A549 (cell line): ENCODE measurements at regions of chr12 and their contacts with region 1.

Region 1: GRCh38 chr12:62793256-62794217 is 141.4 kb downstream of the PPM1H start:
- DNase-seq: peak; percentile 84 to 96
- ATAC-seq: peak; percentile 93 to 96
- H3K4me3 ChIP-seq: 0 out of 3 replicates have a peak overlapping the region, but pooled peaks have one; percentile 2
- H3K27ac ChIP-seq: peak overlapping the region; percentile 91 to 94
- H3K4me1 ChIP-seq: peaks cover 42% of the 10 kb centered on the region
- CTCF ChIP-seq: peak; percentile 98
- EP300 ChIP-seq: peak in 1 of 2 experiments; percentile 37; a peak in 2 of 5 replicates
- POLR2A ChIP-seq: no peak
- RAD21 ChIP-seq: peak; percentile 99 to 100

Region 2: GRCh38 chr12:62588916-62589315 is 204.6 kb before region 1 on chr12:
- CTCF ChIA-PET with region 1: interaction called, 131 read pairs
- POLR2A ChIA-PET with region 1: no interaction called
- DNase-seq: peak in 1 of 2 experiments; percentile 34
- ATAC-seq: peak; percentile 39 to 85; a peak in 3 of 6 replicates
- H3K4me3 ChIP-seq: no peak overlapping the region
- H3K27ac ChIP-seq: peak overlapping the region; percentile 34 to 71; a peak in 5 of 6 replicates
- H3K4me1 ChIP-seq: peaks cover 18% of the 10 kb centered on the region
- CTCF ChIP-seq: no peak
- EP300 ChIP-seq: no peak
- POLR2A ChIP-seq: no peak
- RAD21 ChIP-seq: no peak

Region 3: GRCh38 chr12:62618930-62619329 is 174.6 kb before region 1 on chr12:
- CTCF ChIA-PET with region 1: interaction called, 14 read pairs
- POLR2A ChIA-PET with region 1: no interaction called
- DNase-seq: no peak
- ATAC-seq: peak in 1 of 2 experiments; percentile 5; a peak in 1 of 6 replicates
- H3K4me3 ChIP-seq: no peak overlapping the region
- H3K27ac ChIP-seq: peak overlapping the region in 1 of 2 experiments; percentile 42; a peak in 1 of 6 replicates
- H3K4me1 ChIP-seq: peaks cover 20% of the 10 kb centered on the region
- CTCF ChIP-seq: no peak
- EP300 ChIP-seq: no peak
- POLR2A ChIP-seq: no peak
- RAD21 ChIP-seq: no peak

Region 4: DNA sequence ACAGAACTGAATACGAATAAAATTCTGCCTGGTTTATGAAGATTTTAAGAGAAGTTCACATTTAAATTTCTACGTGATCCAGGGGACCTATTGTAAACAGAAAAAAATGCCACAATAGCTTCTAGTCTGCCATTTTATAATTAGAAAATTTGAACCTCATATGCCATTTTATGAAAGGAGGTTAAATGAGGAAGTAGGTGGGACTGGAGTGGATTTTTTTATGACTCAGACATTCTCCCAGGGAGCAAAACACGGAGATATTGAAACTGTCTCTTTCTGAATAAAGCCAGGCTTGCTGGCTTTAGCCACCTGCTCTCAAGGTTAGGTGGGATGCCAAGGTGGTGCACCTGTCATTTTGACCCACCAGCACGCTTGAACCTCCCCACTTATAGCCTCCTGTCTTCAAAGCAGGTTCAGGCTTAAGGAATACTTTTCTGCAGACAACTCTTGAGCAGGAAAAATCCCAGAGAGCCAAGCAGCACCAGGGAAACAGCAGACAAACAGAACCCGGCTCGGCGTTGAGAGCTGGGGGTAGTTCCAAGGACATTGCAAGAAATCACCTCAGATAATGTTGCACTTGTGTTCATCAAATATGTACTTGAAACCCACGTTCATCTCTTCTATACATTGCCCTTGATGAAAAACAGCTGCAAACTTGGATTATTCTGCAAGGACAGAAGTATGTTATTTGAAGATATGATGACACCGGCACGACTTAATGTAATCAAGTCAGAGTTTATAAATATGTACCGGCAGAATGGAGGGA is 62.3 kb before region 1 on chr12:
- CTCF ChIA-PET with region 1: interaction called, 16 read pairs
- POLR2A ChIA-PET with region 1: interaction called, 5 read pairs
- DNase-seq: peak; percentile 66 to 79
- ATAC-seq: peak; percentile 29 to 51
- H3K4me3 ChIP-seq: 0 out of 3 replicates have a peak overlapping the region, but pooled peaks have one; percentile 0
- H3K27ac ChIP-seq: peak overlapping the region; percentile 94 to 98
- H3K4me1 ChIP-seq: peaks cover 92% of the 10 kb centered on the region
- CTCF ChIP-seq: no peak
- EP300 ChIP-seq: 0 out of 5 replicates have a peak, but pooled peaks of 1 of the 2 experiments have one; percentile 2
- POLR2A ChIP-seq: peak; percentile 15; the same call in 1 of the 2 replicates
- RAD21 ChIP-seq: peak in 1 of 2 experiments; percentile 1; a peak in 2 of 5 replicates

Region 5: GRCh38 chr12:62779488-62779887 is 14.0 kb before region 1 on chr12:
- CTCF ChIA-PET with region 1: interaction called, 17 read pairs
- POLR2A ChIA-PET with region 1: no interaction called
- DNase-seq: no peak
- ATAC-seq: no peak
- H3K4me3 ChIP-seq: no peak overlapping the region
- H3K27ac ChIP-seq: peak overlapping the region in 1 of 2 experiments; percentile 94; a peak in 3 of 6 replicates
- H3K4me1 ChIP-seq: peaks cover 19% of the 10 kb centered on the region
- CTCF ChIP-seq: no peak
- EP300 ChIP-seq: no peak
- POLR2A ChIP-seq: no peak
- RAD21 ChIP-seq: no peak

Region 6: DNA sequence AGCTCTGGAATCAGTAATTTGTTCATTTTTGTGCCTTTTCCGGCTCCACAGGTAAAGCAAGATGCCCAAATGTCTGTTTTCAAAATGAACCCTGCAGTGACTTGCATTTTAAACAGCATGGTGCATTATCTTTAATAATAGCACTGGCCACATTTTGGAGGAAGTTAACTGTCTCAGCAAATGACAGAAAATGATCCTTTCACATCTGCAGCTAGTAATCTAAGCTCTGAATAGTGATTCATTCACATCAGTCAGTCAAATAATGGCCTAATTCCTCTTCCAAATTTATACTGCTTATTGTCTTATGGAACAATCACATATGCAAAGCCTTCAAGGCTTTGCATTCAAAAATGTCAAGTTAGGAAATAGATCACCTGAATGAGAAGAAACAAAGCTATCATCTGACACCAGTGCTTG is 65.8 kb after region 1 on chr12:
- CTCF ChIA-PET with region 1: no interaction called
- POLR2A ChIA-PET with region 1: no interaction called
- DNase-seq: no peak
- ATAC-seq: no peak
- H3K4me3 ChIP-seq: no peak overlapping the region
- H3K27ac ChIP-seq: peak overlapping the region in 1 of 2 experiments; percentile 13; a peak in 1 of 6 replicates
- H3K4me1 ChIP-seq: peaks cover 39% of the 10 kb centered on the region
- CTCF ChIP-seq: no peak
- EP300 ChIP-seq: no peak
- POLR2A ChIP-seq: no peak
- RAD21 ChIP-seq: no peak